HCT116 (cell line): ENCODE measurements at regions of chr4 and their contacts with region 1.

Region 1: DNA sequence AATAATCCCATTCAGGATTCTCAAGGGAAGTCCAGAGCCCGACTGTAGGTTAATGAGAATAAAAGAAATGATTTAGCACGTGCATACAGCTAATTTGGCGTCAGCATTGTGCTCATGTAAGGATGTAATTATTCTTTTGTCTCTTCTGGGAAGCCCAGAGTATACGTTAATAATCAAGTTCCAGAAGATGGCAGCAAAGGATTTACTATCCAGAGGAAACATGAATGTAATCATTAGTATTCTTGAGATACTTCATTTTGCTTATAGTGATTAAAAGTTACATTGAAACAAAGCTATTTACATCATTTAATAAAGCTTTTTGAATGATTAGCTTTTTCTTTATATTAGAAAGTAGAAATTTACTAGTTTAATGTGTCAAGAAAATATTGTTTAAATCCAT is 27.1 kb upstream of the MAP9 start:
- DNase-seq: peak; percentile 36
- ATAC-seq: peak; percentile 83
- H3K4me3 ChIP-seq: no peak overlapping the region
- H3K27ac ChIP-seq: no peak overlapping the region
- H3K4me1 ChIP-seq: no peaks in the 10 kb centered on the region
- H3K27me3 ChIP-seq: no peaks in the 10 kb centered on the region
- CTCF ChIP-seq: peak in 2 of 3 experiments; percentile 50 to 53; a peak in 3 of 6 replicates
- POLR2A ChIP-seq: no peak
- RAD21 ChIP-seq: peak; percentile 75

Region 2: DNA sequence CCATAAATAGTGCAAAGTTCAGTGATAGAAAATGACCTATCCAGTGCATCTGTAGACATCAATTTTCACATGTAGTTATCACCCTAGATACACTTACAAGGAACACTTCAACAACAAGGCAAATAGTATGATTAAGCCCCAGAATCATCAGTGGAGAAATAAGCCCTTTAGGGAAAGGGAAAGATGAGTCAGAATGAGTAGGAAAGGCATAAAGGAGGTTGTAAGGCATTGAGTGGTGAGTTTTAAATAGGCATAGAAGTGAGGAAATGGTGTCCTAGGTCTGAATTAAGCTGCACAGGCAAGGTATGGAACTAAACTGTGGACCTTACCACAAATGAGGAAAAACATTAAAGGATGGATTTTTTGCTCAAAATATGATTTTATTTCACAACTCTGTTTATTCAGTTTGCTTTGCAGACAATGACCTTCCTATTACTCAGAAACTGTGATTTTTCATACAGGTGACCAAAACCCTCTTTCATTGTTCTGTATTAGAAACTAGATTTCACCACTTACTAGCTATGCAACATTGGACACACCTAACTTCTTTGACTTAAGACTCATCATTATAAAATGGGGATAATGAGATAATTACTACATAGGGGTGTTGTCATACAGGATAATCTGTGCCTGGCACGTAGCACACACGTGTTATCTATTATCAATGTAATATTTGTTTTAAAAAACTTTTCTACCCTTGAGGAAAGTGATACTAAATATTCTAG is 29.9 kb after region 1 on chr4:
- CTCF ChIA-PET with region 1: no interaction called
- POLR2A ChIA-PET with region 1: no interaction called
- RAD21 ChIA-PET with region 1: no interaction called
- intact Hi-C with region 1: no loop called
- DNase-seq: no peak
- ATAC-seq: no peak
- H3K4me3 ChIP-seq: no peak overlapping the region
- H3K27ac ChIP-seq: no peak overlapping the region
- H3K4me1 ChIP-seq: peaks cover 0 to 8% of the 10 kb centered on the region in 2 experiments; a peak in 1 of 4 replicates
- H3K27me3 ChIP-seq: no peaks in the 10 kb centered on the region
- CTCF ChIP-seq: no peak
- POLR2A ChIP-seq: no peak
- RAD21 ChIP-seq: no peak

Region 3: DNA sequence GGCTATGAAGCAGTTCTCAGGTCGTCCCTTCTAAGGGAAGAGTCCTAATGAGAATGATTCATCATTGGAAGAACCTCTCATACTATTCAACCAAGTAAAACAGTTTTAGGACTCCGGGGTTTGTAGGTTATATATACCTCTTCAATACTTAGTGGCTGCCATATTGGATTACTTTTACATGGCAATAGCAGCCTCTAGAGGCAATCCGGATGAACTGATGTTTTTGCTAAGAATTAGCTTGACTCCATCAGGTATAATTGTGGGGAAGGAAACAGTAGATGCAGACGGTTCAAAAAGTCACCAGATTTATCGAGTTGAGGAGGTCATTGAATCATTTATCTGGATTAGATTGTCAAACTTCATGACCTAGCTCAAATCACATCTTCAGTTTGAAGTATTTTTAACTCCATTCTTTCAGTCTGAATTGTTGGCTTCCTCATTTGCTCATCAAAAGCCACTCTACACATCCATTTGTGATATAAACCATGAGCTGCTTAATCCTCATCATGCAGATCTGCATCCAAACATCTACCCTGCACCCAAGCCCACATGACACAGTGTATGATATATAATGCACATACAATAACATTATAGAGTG is 383.3 kb after region 1 on chr4:
- CTCF ChIA-PET with region 1: interaction called, 36 read pairs
- POLR2A ChIA-PET with region 1: no interaction called
- RAD21 ChIA-PET with region 1: interaction called in 1 of 2 experiments, 3 read pairs
- intact Hi-C with region 1: loop called (anchors 2 kb)
- DNase-seq: peak; percentile 44
- ATAC-seq: peak; percentile 98
- H3K4me3 ChIP-seq: no peak overlapping the region
- H3K27ac ChIP-seq: no peak overlapping the region
- H3K4me1 ChIP-seq: no peaks in the 10 kb centered on the region
- H3K27me3 ChIP-seq: no peaks in the 10 kb centered on the region
- CTCF ChIP-seq: peak; percentile 72 to 81 (median 74)
- POLR2A ChIP-seq: no peak
- RAD21 ChIP-seq: peak; percentile 86

Region 4: GRCh38 chr4:155889031-155889793 is 485.3 kb after region 1 on chr4:
- CTCF ChIA-PET with region 1: no interaction called
- POLR2A ChIA-PET with region 1: no interaction called
- RAD21 ChIA-PET with region 1: no interaction called
- intact Hi-C with region 1: no loop called
- DNase-seq: no peak
- ATAC-seq: no peak
- H3K4me3 ChIP-seq: no peak overlapping the region
- H3K27ac ChIP-seq: no peak overlapping the region
- H3K4me1 ChIP-seq: no peaks in the 10 kb centered on the region
- H3K27me3 ChIP-seq: no peaks in the 10 kb centered on the region
- CTCF ChIP-seq: no peak
- POLR2A ChIP-seq: no peak
- RAD21 ChIP-seq: no peak

Region 5: GRCh38 chr4:155953151-155954114 is 549.5 kb after region 1 on chr4 and contains the start of gene CTSO:
- CTCF ChIA-PET with region 1: interaction called, 13 read pairs
- POLR2A ChIA-PET with region 1: no interaction called
- RAD21 ChIA-PET with region 1: interaction called in 1 of 2 experiments, 3 read pairs
- intact Hi-C with region 1: loop called (anchors 1 kb)
- DNase-seq: peak; percentile 56
- ATAC-seq: peak; percentile 90
- H3K4me3 ChIP-seq: peak within 1 kb of the TSS; percentile 33 to 56
- H3K27ac ChIP-seq: peak within 1 kb of the TSS; percentile 72
- H3K4me1 ChIP-seq: peaks cover 0 to 6% of the 10 kb centered on the region in 2 experiments; a peak in 1 of 4 replicates
- H3K27me3 ChIP-seq: no peaks in the 10 kb centered on the region
- CTCF ChIP-seq: peak; percentile 46 to 66 (median 65)
- POLR2A ChIP-seq: peak; percentile 15
- RAD21 ChIP-seq: peak; percentile 64
- total RNA-seq, gene CTSO: 0.57 TPM

Region 6: GRCh38 chr4:156378033-156378665 is 974.3 kb after region 1 on chr4:
- CTCF ChIA-PET with region 1: no interaction called
- POLR2A ChIA-PET with region 1: no interaction called
- RAD21 ChIA-PET with region 1: no interaction called
- intact Hi-C with region 1: loop called (anchors 2 kb)
- DNase-seq: peak; percentile 24
- ATAC-seq: peak; percentile 69
- H3K4me3 ChIP-seq: no peak overlapping the region
- H3K27ac ChIP-seq: no peak overlapping the region
- H3K4me1 ChIP-seq: peaks cover 10% of the 10 kb centered on the region in 2 experiments; a peak in 2 of 4 replicates
- H3K27me3 ChIP-seq: no peaks in the 10 kb centered on the region
- CTCF ChIP-seq: peak; percentile 61 to 74 (median 74); a peak in 5 of 6 replicates
- POLR2A ChIP-seq: no peak
- RAD21 ChIP-seq: peak; percentile 73